Transverse colon (tissue), 4 donors: ENCODE measurements at regions of chr1 and their contacts with region 1.

Region 1: GRCh38 chr1:109773146-109773899 is 9.6 kb upstream of the EPS8L3 start:
- DNase-seq: peak; percentile 87
- H3K4me3 ChIP-seq: no peak overlapping the region
- H3K27ac ChIP-seq: no peak overlapping the region
- H3K4me1 ChIP-seq: peaks cover 0 to 7% (median 4%) of the 10 kb centered on the region in 4 donors
- H3K27me3 ChIP-seq: no peaks in the 10 kb centered on the region
- CTCF ChIP-seq: peak; percentile 79 to 93 (median 84)
- EP300 ChIP-seq: no peak
- POLR2A ChIP-seq: no peak

Region 2: DNA sequence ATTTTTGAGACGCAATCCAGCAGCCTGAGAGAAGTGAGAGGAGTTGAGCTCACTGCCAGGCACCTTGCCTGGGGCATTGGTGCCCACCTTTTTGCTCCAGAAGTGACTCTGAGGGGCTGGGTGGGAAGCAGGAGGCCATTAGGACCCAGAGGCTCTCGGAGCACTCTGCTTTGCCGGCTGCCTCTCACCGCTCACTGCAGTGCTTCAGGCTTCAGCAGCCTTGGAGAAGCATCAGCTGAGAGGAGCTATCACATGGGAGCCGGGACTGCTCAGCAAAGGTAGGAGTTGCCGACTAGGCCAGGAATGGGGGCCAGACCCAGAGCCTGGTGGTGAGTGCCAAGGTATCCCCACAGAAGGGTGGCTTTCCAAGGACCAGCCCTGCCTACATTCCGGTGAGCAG is 233.6 kb before region 1 on chr1 and contains the start of gene GPR61:
- in situ Hi-C with region 1: loop called in 2 of 4 experiments (anchors 10 kb)
- intact Hi-C with region 1: loop called (anchors 2 kb)
- DNase-seq: no peak
- H3K4me3 ChIP-seq: no peak within 1 kb of the TSS
- H3K27ac ChIP-seq: no peak within 1 kb of the TSS
- H3K4me1 ChIP-seq: peaks cover 0 to 10% (median 0%) of the 10 kb centered on the region in 4 donors
- H3K27me3 ChIP-seq: no peaks in the 10 kb centered on the region
- CTCF ChIP-seq: no peak
- EP300 ChIP-seq: no peak
- POLR2A ChIP-seq: no peak
- total RNA-seq, gene GPR61: not detected

Region 3: GRCh38 chr1:109643385-109644230 is 129.7 kb before region 1 on chr1:
- in situ Hi-C with region 1: loop called in 1 of 4 experiments (anchors 5 kb)
- intact Hi-C with region 1: loop called (anchors 5 kb)
- DNase-seq: peak; percentile 92
- H3K4me3 ChIP-seq: no peak overlapping the region
- H3K27ac ChIP-seq: no peak overlapping the region
- H3K4me1 ChIP-seq: peaks cover 0 to 9% (median 8%) of the 10 kb centered on the region in 4 donors
- H3K27me3 ChIP-seq: no peaks in the 10 kb centered on the region
- CTCF ChIP-seq: peak; percentile 85 to 90 (median 88)
- EP300 ChIP-seq: no peak
- POLR2A ChIP-seq: no peak

Region 4: GRCh38 chr1:109655601-109656519 is 117.5 kb before region 1 on chr1 and contains the start of gene GSTM4:
- in situ Hi-C with region 1: loop called in 2 of 4 experiments (anchors 5 to 10 kb)
- intact Hi-C with region 1: no loop called
- DNase-seq: peak; percentile 93
- H3K4me3 ChIP-seq: peak within 1 kb of the TSS; percentile 12 to 68 (median 56)
- H3K27ac ChIP-seq: peak within 1 kb of the TSS; percentile 81 to 88 (median 86)
- H3K4me1 ChIP-seq: peaks cover 7 to 14% (median 10%) of the 10 kb centered on the region in 4 donors
- H3K27me3 ChIP-seq: no peaks in the 10 kb centered on the region
- CTCF ChIP-seq: no peak
- EP300 ChIP-seq: no peak
- POLR2A ChIP-seq: peak; percentile 87
- total RNA-seq, gene GSTM4: 64.9 to 104 (median 94.8) TPM

Region 5: DNA sequence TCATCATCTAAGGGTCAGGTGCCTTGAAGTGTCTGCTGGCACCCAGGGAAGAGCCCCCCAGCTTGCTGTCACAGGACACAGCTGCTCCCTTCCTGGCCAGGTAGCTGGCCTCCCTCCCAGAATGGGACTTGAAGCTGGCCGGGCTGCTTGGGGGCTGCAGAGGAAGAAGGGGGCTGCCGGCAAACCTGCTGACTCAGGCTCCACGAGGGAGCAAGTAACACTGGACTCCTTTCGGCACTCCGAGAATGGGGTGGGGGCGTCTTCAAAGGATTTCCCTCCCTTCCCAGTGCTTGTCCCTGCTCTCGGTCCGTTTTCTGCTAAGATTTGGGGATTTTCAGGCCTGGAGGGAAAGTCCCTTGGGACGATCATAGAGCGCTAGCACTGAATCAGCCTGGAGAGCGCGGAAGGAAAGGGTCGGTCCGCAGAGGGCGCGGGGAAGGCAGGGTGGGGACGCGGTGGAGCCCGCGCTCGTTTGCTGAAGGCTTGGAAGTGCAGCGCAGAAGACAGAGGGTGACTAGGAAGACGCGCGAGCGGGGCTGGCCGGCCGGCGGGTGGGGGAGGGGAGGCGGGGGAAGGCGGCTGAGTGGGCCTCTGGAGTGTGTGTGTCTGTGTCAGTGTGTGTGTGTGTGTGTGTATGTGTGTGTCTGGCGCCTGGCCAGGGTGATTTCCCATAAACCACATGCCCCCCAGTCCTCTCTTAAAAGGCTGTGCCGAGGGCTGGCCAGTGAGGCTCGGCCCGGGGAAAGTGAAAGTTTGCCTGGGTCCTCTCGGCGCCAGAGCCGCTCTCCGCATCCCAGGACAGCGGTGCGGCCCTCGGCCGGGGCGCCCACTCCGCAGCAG is 137.0 kb after region 1 on chr1 and contains the start of gene CSF1:
- in situ Hi-C with region 1: loop called in 1 of 4 experiments (anchors 25 kb)
- intact Hi-C with region 1: no loop called
- DNase-seq: peak; percentile 74
- H3K4me3 ChIP-seq: peak within 1 kb of the TSS; percentile 41 to 80 (median 66)
- H3K27ac ChIP-seq: peak within 1 kb of the TSS; percentile 77 to 88 (median 82)
- H3K4me1 ChIP-seq: peaks cover 0 to 39% (median 25%) of the 10 kb centered on the region in 4 donors
- H3K27me3 ChIP-seq: peaks cover 5% of the 10 kb centered on the region
- CTCF ChIP-seq: no peak
- EP300 ChIP-seq: no peak
- POLR2A ChIP-seq: peak; percentile 66
- total RNA-seq, gene CSF1: 9.7 to 63.1 (median 14.4) TPM

Region 6: GRCh38 chr1:109984456-109985275 is 211.3 kb after region 1 on chr1 and contains the start of gene AHCYL1:
- in situ Hi-C with region 1: loop called (anchors 5 kb)
- intact Hi-C with region 1: loop called (anchors 1 kb)
- DNase-seq: peak; percentile 100
- H3K4me3 ChIP-seq: peak within 1 kb of the TSS; percentile 69 to 86 (median 84)
- H3K27ac ChIP-seq: peak within 1 kb of the TSS; percentile 93 to 98 (median 96)
- H3K4me1 ChIP-seq: peaks cover 24 to 57% (median 43%) of the 10 kb centered on the region in 4 donors
- H3K27me3 ChIP-seq: no peaks in the 10 kb centered on the region
- CTCF ChIP-seq: peak; percentile 93 to 100 (median 98)
- EP300 ChIP-seq: no peak
- POLR2A ChIP-seq: peak; percentile 99
- total RNA-seq, gene AHCYL1: 31.8 to 71.5 (median 51.3) TPM